ENCODE measurements at regions of chr5 and their contacts with region 1.

Region 1: GRCh38 chr5:82165740-82166530 is 112.2 kb downstream of the RPS23 start:
- DNase-seq: peak; percentile 74
- H3K4me3 ChIP-seq: no peak overlapping the region
- H3K27ac ChIP-seq: peak overlapping the region in 2 of 3 donors; percentile 24 to 54
- H3K4me1 ChIP-seq: peaks cover 7% of the 10 kb centered on the region in 2 donors
- H3K27me3 ChIP-seq: no peaks in the 10 kb centered on the region
- CTCF ChIP-seq: peak; percentile 33 to 98 (median 81)
- POLR2A ChIP-seq: no peak

Region 2: DNA sequence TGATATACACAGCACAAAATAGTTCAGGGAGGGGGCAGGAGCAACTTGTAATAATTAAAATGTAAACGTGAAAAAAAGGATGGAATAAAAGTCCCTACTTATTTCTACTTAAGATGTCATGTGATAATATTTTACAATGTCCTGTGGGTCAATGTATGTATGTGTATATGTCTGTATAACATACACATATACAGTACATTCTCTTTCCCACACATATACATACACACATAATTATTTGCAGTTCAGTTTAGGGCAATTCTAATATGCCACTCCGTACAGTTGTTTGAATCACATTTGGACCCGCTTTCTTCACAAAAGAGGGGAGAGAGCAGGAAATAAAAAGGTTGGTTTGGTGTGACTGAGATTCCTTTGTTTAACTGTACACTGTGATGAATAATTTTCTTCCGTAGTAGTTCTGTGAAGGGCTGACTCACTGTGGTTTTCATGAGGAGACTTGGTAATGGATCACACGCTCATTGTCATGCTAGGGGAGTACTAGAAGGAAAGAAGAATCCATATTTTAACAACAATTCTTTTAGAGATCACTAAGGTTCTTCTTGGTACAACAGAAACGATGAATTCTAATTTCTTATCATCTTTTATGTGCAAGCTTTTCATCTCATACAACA is 745.8 kb before region 1 on chr5:
- intact Hi-C with region 1: loop called (anchors 5 kb)
- DNase-seq: no peak
- H3K4me3 ChIP-seq: no peak overlapping the region
- H3K27ac ChIP-seq: no peak overlapping the region
- H3K4me1 ChIP-seq: no peaks in the 10 kb centered on the region
- H3K27me3 ChIP-seq: no peaks in the 10 kb centered on the region
- CTCF ChIP-seq: no peak
- POLR2A ChIP-seq: no peak

Region 3: GRCh38 chr5:81506900-81507588 is 658.9 kb before region 1 on chr5:
- intact Hi-C with region 1: loop called (anchors 5 kb)
- DNase-seq: peak; percentile 58
- H3K4me3 ChIP-seq: no peak overlapping the region
- H3K27ac ChIP-seq: peak overlapping the region in 2 of 3 donors; percentile 49 to 60
- H3K4me1 ChIP-seq: no peaks in the 10 kb centered on the region
- H3K27me3 ChIP-seq: no peaks in the 10 kb centered on the region
- CTCF ChIP-seq: peak; percentile 61 to 94 (median 92)
- POLR2A ChIP-seq: no peak

Region 4: GRCh38 chr5:81898403-81898802 is 267.5 kb before region 1 on chr5:
- intact Hi-C with region 1: no loop called
- DNase-seq: no peak
- H3K4me3 ChIP-seq: no peak overlapping the region
- H3K27ac ChIP-seq: no peak overlapping the region
- H3K4me1 ChIP-seq: no peaks in the 10 kb centered on the region
- H3K27me3 ChIP-seq: no peaks in the 10 kb centered on the region
- CTCF ChIP-seq: no peak
- POLR2A ChIP-seq: no peak

Measured in thyroid gland (tissue), 4 donors.